BJ (cell line): ENCODE measurements at regions of chr3 and their contacts with region 1.

Region 1: DNA sequence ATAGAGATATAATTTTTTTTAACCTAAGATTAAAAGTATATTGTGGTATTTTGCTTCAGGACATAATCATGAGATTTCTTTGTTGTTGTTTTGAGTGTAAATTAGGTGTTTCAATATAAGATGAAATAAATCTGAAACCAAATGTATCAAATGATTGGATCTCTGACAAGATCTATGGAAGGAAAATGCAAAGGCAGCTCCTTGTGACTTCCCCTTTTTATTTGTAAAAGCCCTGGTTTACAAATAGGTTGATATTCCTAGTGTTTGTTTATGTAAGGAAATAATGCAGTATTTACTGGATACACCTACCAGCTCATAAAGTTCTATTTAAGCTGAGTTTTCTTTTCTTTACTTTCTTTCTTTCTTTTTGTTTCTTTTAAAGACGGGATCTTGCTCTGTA is 35.9 kb downstream of the STT3B start:
- DNase-seq: no peak
- H3K4me3 ChIP-seq: no peak overlapping the region
- H3K27me3 ChIP-seq: no peaks in the 10 kb centered on the region
- CTCF ChIP-seq: no peak

Region 2: GRCh38 chr3:31077021-31077601 is 491.5 kb before region 1 on chr3:
- CTCF ChIA-PET with region 1: no interaction called
- POLR2A ChIA-PET with region 1: interaction called, 16 read pairs
- DNase-seq: peak; percentile 75
- H3K4me3 ChIP-seq: no peak overlapping the region
- H3K27me3 ChIP-seq: no peaks in the 10 kb centered on the region
- CTCF ChIP-seq: no peak